ENCODE measurements at regions of chr9 and their contacts with region 1.

Region 1: DNA sequence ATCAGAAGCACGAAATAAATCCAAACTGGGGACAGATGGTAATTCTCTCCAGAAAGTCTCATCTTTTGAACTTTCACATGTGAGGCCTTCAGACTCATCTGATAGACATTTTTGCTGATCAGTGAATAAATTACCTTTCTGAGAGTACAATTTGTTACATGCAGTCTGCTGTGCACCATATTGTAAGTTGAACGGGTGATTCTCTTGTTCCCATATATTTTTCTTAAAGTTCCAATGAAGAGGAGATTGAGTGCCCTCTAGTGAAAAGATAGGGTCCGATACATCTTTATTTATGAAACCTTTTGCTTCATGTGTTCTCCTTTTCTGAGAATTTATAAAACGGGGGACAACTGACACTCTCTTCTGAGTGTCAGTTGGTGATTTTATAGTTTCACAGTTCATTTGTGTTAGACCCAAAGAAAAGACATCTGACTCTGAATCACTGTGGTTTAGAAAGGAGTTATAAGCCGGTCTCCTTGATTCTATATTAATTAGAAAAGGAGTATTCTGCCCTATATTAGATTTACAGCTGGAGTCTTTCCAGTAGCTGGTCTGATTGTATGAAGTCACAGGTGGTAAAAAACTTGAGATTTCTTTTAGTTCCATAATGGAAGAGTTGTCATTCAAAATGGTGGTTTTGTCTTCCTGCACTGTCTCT is 30.4 kb downstream of the GNG10 start:
- DNase-seq: no peak
- H3K4me3 ChIP-seq: no peak overlapping the region
- H3K27ac ChIP-seq: no peak overlapping the region
- H3K4me1 ChIP-seq: no peaks in the 10 kb centered on the region
- H3K27me3 ChIP-seq: no peaks in the 10 kb centered on the region
- CTCF ChIP-seq: peak in 4 of 6 experiments; percentile 8 to 42 (median 16)
- POLR2A ChIP-seq: no peak

Region 2: DNA sequence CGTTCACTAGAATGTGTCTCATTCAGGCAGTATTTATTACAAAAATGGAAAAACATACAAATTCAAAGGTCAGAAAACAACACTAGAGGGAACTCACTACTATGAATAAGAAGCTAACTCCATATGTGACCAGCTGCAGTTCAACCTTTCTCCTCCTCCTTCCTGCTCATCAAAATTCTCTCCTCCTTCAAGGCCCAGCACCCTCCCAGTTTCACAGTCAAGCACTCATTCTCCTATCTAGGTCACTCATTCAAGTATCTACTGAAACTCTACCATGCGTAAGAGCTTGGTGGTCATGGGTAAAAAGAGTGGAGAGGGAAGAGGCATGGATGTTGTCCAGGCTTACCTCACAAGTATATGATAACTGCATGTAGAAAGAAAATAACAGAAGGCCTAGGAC is 235.3 kb before region 1 on chr9:
- intact Hi-C with region 1: no loop called
- DNase-seq: no peak
- H3K4me3 ChIP-seq: no peak overlapping the region
- H3K27ac ChIP-seq: no peak overlapping the region
- H3K4me1 ChIP-seq: peaks cover 0 to 52% (median 8%) of the 10 kb centered on the region in 3 donors
- H3K27me3 ChIP-seq: no peaks in the 10 kb centered on the region
- CTCF ChIP-seq: no peak
- POLR2A ChIP-seq: no peak

Region 3: DNA sequence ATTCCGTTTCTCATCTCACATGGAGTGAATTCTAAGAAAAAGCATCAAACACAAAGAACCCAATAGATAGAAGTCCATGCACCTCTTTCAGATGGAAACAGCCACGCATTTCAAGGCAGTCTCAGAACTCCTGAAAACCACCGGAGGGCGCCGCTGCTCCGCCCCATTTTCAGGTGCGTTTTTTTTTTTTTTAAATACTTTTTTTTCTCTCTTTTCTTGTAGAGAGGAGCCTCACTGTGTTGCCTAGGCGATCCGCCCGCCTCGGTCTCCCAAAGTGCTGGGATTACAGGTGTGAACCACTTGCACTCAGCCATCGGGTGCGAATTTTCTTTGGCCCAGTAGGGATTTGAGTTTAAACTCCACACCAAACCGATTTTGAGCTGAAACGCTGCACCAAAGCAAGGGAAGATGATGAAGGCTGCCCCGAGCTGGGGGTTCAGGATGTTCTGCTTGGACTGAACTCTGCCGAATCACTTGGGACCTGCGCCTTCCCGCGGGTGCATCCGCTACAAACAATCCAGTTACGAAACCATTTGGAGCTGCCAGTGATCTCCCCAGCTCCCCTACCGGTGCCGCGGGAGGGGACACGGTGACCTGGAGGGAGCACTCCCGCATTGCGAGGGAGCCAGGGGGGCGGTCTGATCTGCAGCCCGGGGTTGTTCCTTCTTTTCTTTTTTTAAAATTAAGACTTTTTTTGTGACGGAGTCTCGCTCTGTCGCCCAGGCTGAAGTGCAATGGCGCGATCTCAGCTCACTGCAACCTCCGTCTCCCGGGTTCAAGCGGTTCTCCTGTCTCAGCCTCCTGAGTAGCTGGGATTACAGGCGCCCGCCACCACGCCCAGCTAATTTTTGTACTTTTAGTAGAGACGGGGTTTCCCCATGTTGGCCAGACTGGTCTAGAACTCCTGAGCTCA is 93.7 kb before region 1 on chr9:
- intact Hi-C with region 1: loop called (anchors 10 kb)
- DNase-seq: no peak
- H3K4me3 ChIP-seq: peak overlapping the region; percentile 73 to 90 (median 79)
- H3K27ac ChIP-seq: peak overlapping the region; percentile 88 to 93 (median 90)
- H3K4me1 ChIP-seq: peaks cover 6 to 47% (median 8%) of the 10 kb centered on the region in 3 donors
- H3K27me3 ChIP-seq: no peaks in the 10 kb centered on the region
- CTCF ChIP-seq: peak in 5 of 6 experiments; percentile 48 to 68 (median 56)
- POLR2A ChIP-seq: no peak

Measured in esophagus squamous epithelium (tissue), 5 donors.